CD4-positive, alpha-beta memory T cell (primary cell): ENCODE measurements at regions of chr14 and their contacts with region 1.

Region 1: GRCh38 chr14:24678801-24679247 is 44.8 kb upstream of the GZMB start:
- DNase-seq: peak; percentile 79 to 83 (median 81)
- H3K4me3 ChIP-seq: no peak overlapping the region
- H3K4me3 Mint-ChIP-seq: peak overlapping the region; percentile 71 to 91 (median 80)
- H3K27ac ChIP-seq: no peak overlapping the region
- H3K27ac Mint-ChIP-seq: peak overlapping the region; percentile 48 to 95 (median 79)
- H3K4me1 ChIP-seq: peaks cover 14% of the 10 kb centered on the region
- H3K4me1 Mint-ChIP-seq: peaks cover 22 to 50% (median 34%) of the 10 kb centered on the region in 4 donors
- H3K27me3 ChIP-seq: no peaks in the 10 kb centered on the region
- H3K27me3 Mint-ChIP-seq: peaks cover 1 to 8% of the 10 kb centered on the region in 2 donors

Region 2: DNA sequence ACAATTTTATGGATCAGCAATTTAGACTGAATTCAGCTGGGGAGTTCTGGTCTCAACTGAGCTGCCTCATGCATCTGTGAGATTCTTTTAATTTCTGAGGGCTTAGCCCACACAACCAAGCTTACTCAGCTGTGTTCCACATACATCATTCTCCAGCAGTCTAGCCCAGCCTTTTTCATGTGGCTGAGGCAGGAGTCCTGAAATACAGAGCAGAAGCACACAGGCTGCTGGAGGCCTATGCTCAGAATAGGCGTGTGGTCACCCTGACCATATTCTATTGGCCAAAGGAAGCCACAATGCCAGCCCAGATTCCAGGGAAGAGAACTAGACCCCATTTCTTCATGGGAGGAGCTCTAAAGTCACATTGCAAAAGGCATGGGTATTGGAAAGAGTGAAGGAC is 797.5 kb before region 1 on chr14:
- CTCF ChIA-PET with region 1: no interaction called
- POLR2A ChIA-PET with region 1: no interaction called
- intact Hi-C with region 1: no loop called
- DNase-seq: no peak
- H3K4me3 ChIP-seq: no peak overlapping the region
- H3K4me3 Mint-ChIP-seq: peak overlapping the region in 1 of 8 donors; percentile 28
- H3K27ac ChIP-seq: no peak overlapping the region
- H3K27ac Mint-ChIP-seq: no peak overlapping the region
- H3K4me1 ChIP-seq: no peaks in the 10 kb centered on the region
- H3K4me1 Mint-ChIP-seq: no peaks in the 10 kb centered on the region
- H3K27me3 ChIP-seq: no peaks in the 10 kb centered on the region
- H3K27me3 Mint-ChIP-seq: peaks cover 3 to 7% of the 10 kb centered on the region in 2 donors

Region 3: GRCh38 chr14:24366721-24367513 is 311.9 kb before region 1 on chr14:
- CTCF ChIA-PET with region 1: no interaction called
- POLR2A ChIA-PET with region 1: no interaction called
- intact Hi-C with region 1: loop called (anchors 10 kb)
- DNase-seq: peak in 3 of 5 donors; percentile 16 to 22 (median 21)
- H3K4me3 ChIP-seq: no peak overlapping the region
- H3K4me3 Mint-ChIP-seq: peak overlapping the region; percentile 68 to 87 (median 80)
- H3K27ac ChIP-seq: no peak overlapping the region
- H3K27ac Mint-ChIP-seq: peak overlapping the region in 2 of 7 donors; percentile 53 to 81
- H3K4me1 ChIP-seq: peaks cover 35% of the 10 kb centered on the region
- H3K4me1 Mint-ChIP-seq: peaks cover 15 to 31% (median 22%) of the 10 kb centered on the region in 4 donors
- H3K27me3 ChIP-seq: peaks cover 29% of the 10 kb centered on the region
- H3K27me3 Mint-ChIP-seq: peaks cover 31 to 34% of the 10 kb centered on the region in 2 donors

Region 4: GRCh38 chr14:24481622-24482324 is 197.1 kb before region 1 on chr14:
- CTCF ChIA-PET with region 1: interaction called, 14 read pairs
- POLR2A ChIA-PET with region 1: interaction called, 4 read pairs
- intact Hi-C with region 1: loop called (anchors 2 kb)
- DNase-seq: peak in 4 of 5 donors; percentile 18 to 38 (median 25)
- H3K4me3 ChIP-seq: no peak overlapping the region
- H3K4me3 Mint-ChIP-seq: peak overlapping the region in 5 of 8 donors; percentile 38 to 61 (median 51)
- H3K27ac ChIP-seq: no peak overlapping the region
- H3K27ac Mint-ChIP-seq: peak overlapping the region in 4 of 7 donors; percentile 4 to 57 (median 26)
- H3K4me1 ChIP-seq: peaks cover 17% of the 10 kb centered on the region
- H3K4me1 Mint-ChIP-seq: peaks cover 0 to 29% (median 20%) of the 10 kb centered on the region in 4 donors
- H3K27me3 ChIP-seq: no peaks in the 10 kb centered on the region
- H3K27me3 Mint-ChIP-seq: no peaks in the 10 kb centered on the region

Region 5: GRCh38 chr14:24612196-24612595 is 66.6 kb before region 1 on chr14:
- CTCF ChIA-PET with region 1: interaction called, 31 read pairs
- POLR2A ChIA-PET with region 1: interaction called, 7 read pairs
- intact Hi-C with region 1: no loop called
- DNase-seq: no peak
- H3K4me3 ChIP-seq: no peak overlapping the region
- H3K4me3 Mint-ChIP-seq: no peak overlapping the region
- H3K27ac ChIP-seq: no peak overlapping the region
- H3K27ac Mint-ChIP-seq: peak overlapping the region in 2 of 7 donors; percentile 0 to 45
- H3K4me1 ChIP-seq: peaks cover 1% of the 10 kb centered on the region
- H3K4me1 Mint-ChIP-seq: peaks cover 2 to 30% (median 11%) of the 10 kb centered on the region in 4 donors
- H3K27me3 ChIP-seq: no peaks in the 10 kb centered on the region
- H3K27me3 Mint-ChIP-seq: no peaks in the 10 kb centered on the region

Region 6: GRCh38 chr14:24710403-24711112 is 31.7 kb after region 1 on chr14:
- CTCF ChIA-PET with region 1: interaction called, 31 read pairs
- POLR2A ChIA-PET with region 1: no interaction called
- intact Hi-C with region 1: no loop called
- DNase-seq: peak; percentile 26 to 53 (median 47)
- H3K4me3 ChIP-seq: no peak overlapping the region
- H3K4me3 Mint-ChIP-seq: no peak overlapping the region
- H3K27ac ChIP-seq: no peak overlapping the region
- H3K27ac Mint-ChIP-seq: peak overlapping the region in 1 of 7 donors; percentile 49
- H3K4me1 ChIP-seq: peaks cover 4% of the 10 kb centered on the region
- H3K4me1 Mint-ChIP-seq: no peaks in the 10 kb centered on the region
- H3K27me3 ChIP-seq: no peaks in the 10 kb centered on the region
- H3K27me3 Mint-ChIP-seq: peaks cover 2 to 6% of the 10 kb centered on the region in 2 donors

Region 7: GRCh38 chr14:24774187-24774915 is 95.5 kb after region 1 on chr14:
- CTCF ChIA-PET with region 1: no interaction called
- POLR2A ChIA-PET with region 1: no interaction called
- intact Hi-C with region 1: no loop called
- DNase-seq: no peak
- H3K4me3 ChIP-seq: no peak overlapping the region
- H3K4me3 Mint-ChIP-seq: no peak overlapping the region
- H3K27ac ChIP-seq: no peak overlapping the region
- H3K27ac Mint-ChIP-seq: no peak overlapping the region
- H3K4me1 ChIP-seq: no peaks in the 10 kb centered on the region
- H3K4me1 Mint-ChIP-seq: no peaks in the 10 kb centered on the region
- H3K27me3 ChIP-seq: no peaks in the 10 kb centered on the region
- H3K27me3 Mint-ChIP-seq: peaks cover 18 to 21% of the 10 kb centered on the region in 2 donors

Region 8: DNA sequence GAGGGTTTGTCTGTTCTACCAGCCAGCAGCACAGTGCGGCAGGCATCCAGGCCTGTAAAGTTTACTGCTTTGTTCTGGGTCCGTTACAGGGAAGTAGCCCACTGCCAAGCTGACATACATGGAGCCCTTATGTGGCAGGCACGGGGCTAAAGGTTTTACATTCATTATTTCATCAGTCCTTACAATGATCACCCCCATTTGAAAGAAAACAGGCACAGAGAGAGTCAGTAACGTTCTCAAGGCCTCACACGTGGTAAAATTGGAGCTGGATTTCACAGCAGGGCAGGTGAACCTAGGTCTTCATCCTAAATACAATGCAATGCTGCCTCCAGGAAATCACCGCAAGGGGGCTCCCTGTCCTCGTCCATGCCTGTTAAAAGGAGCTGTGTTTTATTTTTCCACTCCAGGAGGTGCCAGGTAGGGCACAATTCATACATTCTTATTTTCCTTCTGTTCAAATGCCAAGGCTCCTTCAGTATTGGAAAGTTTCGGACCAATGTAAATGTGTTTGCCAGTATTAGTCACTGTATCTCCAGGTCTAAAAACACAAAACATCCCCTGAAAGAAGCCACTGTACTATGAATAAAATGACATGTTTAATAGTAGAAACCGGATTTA is 127.3 kb after region 1 on chr14:
- CTCF ChIA-PET with region 1: no interaction called
- POLR2A ChIA-PET with region 1: no interaction called
- intact Hi-C with region 1: no loop called
- DNase-seq: peak in 1 of 5 donors; percentile 2
- H3K4me3 ChIP-seq: no peak overlapping the region
- H3K4me3 Mint-ChIP-seq: no peak overlapping the region
- H3K27ac ChIP-seq: no peak overlapping the region
- H3K27ac Mint-ChIP-seq: no peak overlapping the region
- H3K4me1 ChIP-seq: no peaks in the 10 kb centered on the region
- H3K4me1 Mint-ChIP-seq: no peaks in the 10 kb centered on the region
- H3K27me3 ChIP-seq: no peaks in the 10 kb centered on the region
- H3K27me3 Mint-ChIP-seq: peaks cover 8 to 14% of the 10 kb centered on the region in 2 donors